Aorta (tissue), 5 donors: ENCODE measurements at regions of chr21 and their contacts with region 1.

Region 1: DNA sequence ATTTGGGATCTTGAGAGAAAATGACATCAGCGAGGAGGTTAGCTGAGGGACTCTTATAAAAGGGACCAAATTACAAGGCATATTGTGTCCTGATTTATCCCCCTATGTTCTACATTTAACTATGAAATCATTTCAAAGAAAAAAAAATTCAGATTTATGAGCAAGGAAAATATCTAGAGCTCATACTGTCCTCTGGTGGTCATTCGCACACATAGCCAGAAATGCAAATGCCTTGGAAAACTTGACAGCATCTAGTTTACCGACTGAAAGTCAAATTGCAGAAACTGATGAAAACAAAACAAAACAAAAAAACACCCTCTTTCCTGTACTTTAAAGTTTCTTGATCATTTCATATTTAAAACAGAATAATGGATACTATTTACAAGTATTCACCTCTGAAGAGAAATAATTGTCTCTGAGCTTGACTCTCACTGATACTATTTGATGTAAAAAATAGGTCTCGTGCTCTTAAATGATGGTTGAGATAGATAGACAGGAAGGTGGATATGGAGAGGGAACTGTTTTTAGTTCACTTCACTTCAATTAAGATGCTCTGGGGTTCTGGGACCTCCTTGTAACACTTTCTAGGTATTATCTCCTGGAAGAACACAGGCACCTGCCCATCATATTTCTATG is 253.8 kb downstream of the PCP4 start:
- DNase-seq: no peak
- ATAC-seq: peak; percentile 48
- H3K4me3 ChIP-seq: no peak overlapping the region
- H3K27ac ChIP-seq: no peak overlapping the region
- H3K4me1 ChIP-seq: peaks cover 0 to 1% of the 10 kb centered on the region in 2 donors
- H3K27me3 ChIP-seq: no peaks in the 10 kb centered on the region

Region 2: GRCh38 chr21:39788383-39788782 is 332.7 kb before region 1 on chr21:
- intact Hi-C with region 1: loop called (anchors 2 to 5 kb)
- DNase-seq: peak; percentile 69 to 90
- ATAC-seq: peak; percentile 92
- H3K4me3 ChIP-seq: no peak overlapping the region
- H3K27ac ChIP-seq: no peak overlapping the region
- H3K4me1 ChIP-seq: no peaks in the 10 kb centered on the region
- H3K27me3 ChIP-seq: no peaks in the 10 kb centered on the region

Region 3: DNA sequence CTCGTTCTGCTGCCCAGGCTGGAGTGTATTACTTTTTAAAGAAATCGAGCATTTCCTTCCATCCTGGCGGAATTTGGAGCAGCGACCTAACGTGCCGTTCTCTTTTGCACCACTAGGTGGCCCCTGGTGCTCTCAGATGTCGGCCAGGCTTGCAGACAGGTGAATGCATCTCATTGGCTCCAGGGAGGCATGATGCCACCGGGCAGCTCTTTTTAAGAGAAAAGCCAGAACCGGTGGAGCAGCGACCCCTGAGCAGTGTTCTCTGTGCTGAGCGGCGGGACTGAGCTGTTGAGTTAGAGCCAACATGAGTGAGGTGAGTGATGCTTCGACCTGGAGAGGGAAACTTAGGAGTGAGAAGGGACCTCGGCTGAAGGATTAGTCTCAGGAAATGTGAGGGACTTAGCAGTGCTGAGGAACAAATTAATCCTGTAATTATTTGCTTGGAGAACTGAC is 253.8 kb before region 1 on chr21 and contains the start of gene PCP4:
- intact Hi-C with region 1: loop called (anchors 1 to 2 kb)
- DNase-seq: no peak
- ATAC-seq: peak; percentile 61
- H3K4me3 ChIP-seq: no peak within 1 kb of the TSS
- H3K27ac ChIP-seq: no peak within 1 kb of the TSS
- H3K4me1 ChIP-seq: no peaks in the 10 kb centered on the region
- H3K27me3 ChIP-seq: no peaks in the 10 kb centered on the region
- total RNA-seq, gene PCP4: 3.2 TPM in 1 of 2 donors, not detected in the other

Region 4: DNA sequence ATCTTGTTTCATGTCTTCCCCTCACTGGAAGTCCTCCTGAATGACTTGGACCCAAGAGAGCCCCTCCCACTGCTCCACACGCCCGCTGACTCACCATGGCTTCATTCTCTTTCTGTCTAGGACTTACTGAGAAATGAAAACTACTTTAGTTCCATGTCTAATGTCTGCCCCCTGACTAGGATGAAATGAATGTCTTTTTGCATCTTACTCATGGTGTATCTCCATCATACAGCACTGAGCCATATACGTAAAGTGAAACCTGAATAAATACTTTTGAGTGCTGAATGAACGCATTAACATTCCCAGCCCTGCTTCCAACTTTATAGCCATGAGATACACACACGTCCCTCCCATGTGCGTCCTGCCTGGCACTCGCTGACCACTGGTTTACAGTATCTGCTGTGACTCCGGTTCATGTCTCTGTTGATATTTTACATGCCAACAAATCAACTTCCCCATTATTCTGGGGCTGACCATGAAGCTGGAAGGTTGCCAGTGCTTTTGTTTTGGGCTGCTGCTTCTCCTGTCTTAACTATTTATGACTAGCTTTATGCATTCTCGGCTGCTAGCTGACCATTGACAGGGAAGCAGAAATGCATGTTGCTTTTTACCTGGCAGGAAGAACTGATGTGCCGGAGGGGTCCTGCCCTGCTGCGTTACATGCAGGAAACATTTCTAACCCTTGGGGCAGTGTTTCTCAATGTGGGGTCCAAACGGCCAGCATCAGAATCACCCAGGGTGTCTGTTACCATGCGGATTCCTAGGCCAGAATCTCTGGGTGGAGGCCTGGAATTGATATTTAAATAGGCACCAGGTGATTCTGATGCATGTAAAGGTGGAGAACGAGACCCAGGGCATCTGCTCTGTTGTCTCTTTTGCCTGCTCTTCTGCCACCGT is 71.4 kb before region 1 on chr21:
- intact Hi-C with region 1: loop called in 1 of 2 experiments (anchors 5 kb)
- DNase-seq: peak; percentile 60 to 89
- ATAC-seq: no peak
- H3K4me3 ChIP-seq: no peak overlapping the region
- H3K27ac ChIP-seq: peak overlapping the region; percentile 18 to 52
- H3K4me1 ChIP-seq: peaks cover 3 to 10% of the 10 kb centered on the region in 2 donors
- H3K27me3 ChIP-seq: no peaks in the 10 kb centered on the region

Region 5: DNA sequence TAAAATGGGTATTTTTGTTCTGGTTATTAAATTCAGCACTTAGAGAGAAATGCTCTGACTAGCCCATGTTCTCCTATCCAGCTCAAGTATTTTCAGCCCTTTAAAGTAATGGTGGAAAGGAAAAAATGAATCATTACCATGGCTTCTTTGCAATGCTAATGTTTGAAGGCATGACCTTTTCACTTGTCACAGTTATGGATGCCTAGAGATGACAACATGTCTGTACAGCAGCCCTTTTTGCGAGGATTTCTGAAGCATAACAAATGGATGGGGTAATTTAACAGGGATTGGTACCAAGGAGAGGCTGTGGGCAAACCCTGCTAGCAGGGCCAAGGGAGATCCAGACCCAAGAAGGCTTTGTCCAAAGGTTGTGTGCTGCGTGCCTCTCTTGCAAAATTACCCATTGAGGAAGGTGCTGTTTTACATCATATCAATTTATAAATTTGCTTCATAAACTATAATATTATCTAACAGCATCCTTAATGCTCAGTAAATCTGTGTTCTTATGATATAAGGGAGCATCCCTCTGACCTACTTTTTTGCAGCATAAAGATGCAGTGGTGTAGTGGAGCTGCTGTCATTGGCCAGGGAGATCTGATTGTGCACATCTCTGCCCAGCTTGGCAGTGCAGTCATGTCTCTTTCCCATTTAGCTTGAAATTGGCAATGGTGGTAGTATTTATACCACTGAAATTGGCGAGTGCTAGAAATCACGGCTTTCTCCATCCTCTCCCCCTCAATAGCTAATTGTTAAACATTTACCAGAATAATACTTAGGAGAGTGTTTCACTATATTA is 73.3 kb after region 1 on chr21:
- intact Hi-C with region 1: no loop called
- DNase-seq: no peak
- ATAC-seq: no peak
- H3K4me3 ChIP-seq: no peak overlapping the region
- H3K27ac ChIP-seq: no peak overlapping the region
- H3K4me1 ChIP-seq: no peaks in the 10 kb centered on the region
- H3K27me3 ChIP-seq: no peaks in the 10 kb centered on the region